Activated naive CD4-positive, alpha-beta T cell treated with anti-CD3 and anti-CD28 coated beads for 36 hours (primary cell): ENCODE measurements at regions of chr12 and their contacts with region 1.

Region 1: DNA sequence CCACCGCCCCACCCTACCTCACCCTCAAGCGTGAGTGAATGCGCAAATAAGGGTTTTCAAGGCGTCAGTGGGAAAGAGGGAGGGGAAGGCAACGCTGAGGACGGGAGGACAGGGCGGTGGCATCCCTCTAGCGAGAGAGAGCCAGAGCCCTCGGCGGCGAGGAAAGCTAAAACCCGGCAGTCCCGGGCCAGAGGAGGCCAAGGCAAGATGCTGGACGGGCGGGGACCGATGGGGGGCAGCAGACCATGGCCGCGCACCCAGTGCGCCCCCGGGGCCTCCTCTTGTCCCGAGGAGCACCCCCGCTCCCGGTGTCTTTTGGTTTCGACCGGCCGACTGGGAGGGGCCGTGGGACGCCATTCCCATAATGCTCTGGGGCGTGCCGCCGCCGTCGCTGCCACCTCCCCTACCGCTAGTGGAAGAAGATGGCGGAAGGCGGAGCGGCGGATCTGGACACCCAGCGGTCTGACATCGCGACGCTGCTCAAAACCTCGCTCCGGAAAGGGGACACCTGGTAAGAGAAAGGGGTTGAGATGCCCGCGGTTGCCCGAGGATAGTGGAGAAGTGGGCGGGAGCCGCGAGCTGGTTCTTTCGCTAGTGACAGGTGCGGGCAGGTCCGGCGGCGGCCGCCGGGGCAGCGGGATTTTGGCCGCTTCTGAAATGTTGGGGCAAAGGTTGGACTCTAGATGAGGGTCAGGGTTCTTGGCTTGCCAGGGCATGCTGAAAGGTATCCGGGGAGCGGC is at the start of gene USP15:
- DNase-seq: peak; percentile 96
- H3K4me3 Mint-ChIP-seq: peak within 1 kb of the TSS; percentile 85
- H3K27ac Mint-ChIP-seq: peak within 1 kb of the TSS; percentile 98
- H3K4me1 Mint-ChIP-seq: peaks cover 58% of the 10 kb centered on the region
- H3K27me3 Mint-ChIP-seq: no peaks in the 10 kb centered on the region
- total RNA-seq, gene USP15: 84.5 to 95.5 TPM

Region 2: DNA sequence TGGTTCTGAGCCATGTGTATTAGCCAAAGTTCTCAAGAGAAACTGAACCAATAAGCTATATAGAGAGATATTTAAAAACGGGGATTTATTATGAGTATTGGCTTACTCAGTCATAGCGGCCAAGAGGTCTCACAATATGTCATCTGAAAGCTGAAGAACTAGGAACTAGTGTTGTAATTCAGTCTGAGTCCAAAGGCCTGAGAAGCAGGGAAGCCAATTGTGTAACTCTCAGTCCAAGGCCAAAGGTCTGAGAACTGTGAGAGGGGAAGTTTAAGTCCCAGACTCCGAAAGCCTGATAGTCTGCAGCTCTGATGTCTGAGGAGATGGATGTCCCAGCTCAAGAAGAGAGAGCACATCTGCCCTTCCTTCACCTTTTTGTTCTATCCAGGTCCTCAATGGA is 344.7 kb before region 1 on chr12:
- CTCF ChIA-PET with region 1: no interaction called
- intact Hi-C with region 1: no loop called
- DNase-seq: no peak
- H3K4me3 Mint-ChIP-seq: no peak overlapping the region
- H3K27ac Mint-ChIP-seq: no peak overlapping the region
- H3K4me1 Mint-ChIP-seq: no peaks in the 10 kb centered on the region
- H3K27me3 Mint-ChIP-seq: no peaks in the 10 kb centered on the region

Region 3: DNA sequence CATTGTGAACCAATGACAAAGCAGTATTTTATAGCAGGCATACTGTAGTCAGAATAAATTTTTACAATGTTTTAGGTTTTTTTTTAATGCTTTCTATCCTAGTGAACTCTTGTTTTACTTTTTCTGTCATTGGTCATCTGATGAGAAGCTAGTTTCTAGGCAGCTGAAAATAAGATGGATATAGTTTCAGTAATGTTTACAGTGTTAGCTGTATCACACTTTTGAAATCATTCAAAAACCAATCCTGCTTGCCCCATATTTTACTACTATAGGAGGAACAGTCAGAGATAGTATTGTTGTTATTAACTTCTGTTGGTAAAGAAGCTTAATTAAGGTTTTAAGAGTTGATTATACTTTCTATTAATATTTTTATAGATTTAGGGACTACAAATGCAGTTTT is 24.6 kb after region 1 on chr12:
- CTCF ChIA-PET with region 1: interaction called, 3 read pairs
- intact Hi-C with region 1: loop called (anchors 1 kb)
- DNase-seq: no peak
- H3K4me3 Mint-ChIP-seq: no peak overlapping the region
- H3K27ac Mint-ChIP-seq: peak overlapping the region; percentile 30
- H3K4me1 Mint-ChIP-seq: peaks cover 85% of the 10 kb centered on the region
- H3K27me3 Mint-ChIP-seq: no peaks in the 10 kb centered on the region

Region 4: GRCh38 chr12:62466594-62467491 is 206.7 kb after region 1 on chr12 and contains the start of gene MON2:
- CTCF ChIA-PET with region 1: no interaction called
- intact Hi-C with region 1: loop called (anchors 1 kb)
- DNase-seq: peak; percentile 87
- H3K4me3 Mint-ChIP-seq: peak within 1 kb of the TSS; percentile 74
- H3K27ac Mint-ChIP-seq: peak within 1 kb of the TSS; percentile 88
- H3K4me1 Mint-ChIP-seq: peaks cover 15% of the 10 kb centered on the region
- H3K27me3 Mint-ChIP-seq: no peaks in the 10 kb centered on the region
- total RNA-seq, gene MON2: 29.2 to 29.8 TPM

Region 5: GRCh38 chr12:62640910-62641448 is 380.8 kb after region 1 on chr12:
- CTCF ChIA-PET with region 1: no interaction called
- intact Hi-C with region 1: loop called (anchors 2 kb)
- DNase-seq: peak; percentile 71
- H3K4me3 Mint-ChIP-seq: peak overlapping the region; percentile 48
- H3K27ac Mint-ChIP-seq: peak overlapping the region; percentile 67
- H3K4me1 Mint-ChIP-seq: peaks cover 18% of the 10 kb centered on the region
- H3K27me3 Mint-ChIP-seq: peaks cover under 1% of the 10 kb centered on the region

Region 6: GRCh38 chr12:62793256-62794217 is 533.4 kb after region 1 on chr12:
- CTCF ChIA-PET with region 1: no interaction called
- intact Hi-C with region 1: loop called (anchors 5 kb)
- DNase-seq: peak; percentile 83
- H3K4me3 Mint-ChIP-seq: no peak overlapping the region
- H3K27ac Mint-ChIP-seq: no peak overlapping the region
- H3K4me1 Mint-ChIP-seq: no peaks in the 10 kb centered on the region
- H3K27me3 Mint-ChIP-seq: no peaks in the 10 kb centered on the region